ENCODE measurements at regions of chr22 and their contacts with region 1.

Region 1: GRCh38 chr22:20507253-20508066 is at the start of gene MED15:
- DNase-seq: peak; percentile 69 to 87 (median 83)
- ATAC-seq: peak; percentile 92
- H3K4me3 ChIP-seq: peak within 1 kb of the TSS; percentile 92
- H3K4me3 Mint-ChIP-seq: peak within 1 kb of the TSS; percentile 96 to 100 (median 98)
- H3K27ac ChIP-seq: peak within 1 kb of the TSS; percentile 95
- H3K27ac Mint-ChIP-seq: peak within 1 kb of the TSS; percentile 90 to 99 (median 96)
- H3K4me1 ChIP-seq: peaks cover 32 to 37% of the 10 kb centered on the region in 2 donors
- H3K4me1 Mint-ChIP-seq: peaks cover 44 to 58% (median 55%) of the 10 kb centered on the region in 7 donors
- H3K27me3 ChIP-seq: no peaks in the 10 kb centered on the region
- H3K27me3 Mint-ChIP-seq: no peaks in the 10 kb centered on the region
- total RNA-seq, gene MED15: 169 to 235 (median 201) TPM

Region 2: DNA sequence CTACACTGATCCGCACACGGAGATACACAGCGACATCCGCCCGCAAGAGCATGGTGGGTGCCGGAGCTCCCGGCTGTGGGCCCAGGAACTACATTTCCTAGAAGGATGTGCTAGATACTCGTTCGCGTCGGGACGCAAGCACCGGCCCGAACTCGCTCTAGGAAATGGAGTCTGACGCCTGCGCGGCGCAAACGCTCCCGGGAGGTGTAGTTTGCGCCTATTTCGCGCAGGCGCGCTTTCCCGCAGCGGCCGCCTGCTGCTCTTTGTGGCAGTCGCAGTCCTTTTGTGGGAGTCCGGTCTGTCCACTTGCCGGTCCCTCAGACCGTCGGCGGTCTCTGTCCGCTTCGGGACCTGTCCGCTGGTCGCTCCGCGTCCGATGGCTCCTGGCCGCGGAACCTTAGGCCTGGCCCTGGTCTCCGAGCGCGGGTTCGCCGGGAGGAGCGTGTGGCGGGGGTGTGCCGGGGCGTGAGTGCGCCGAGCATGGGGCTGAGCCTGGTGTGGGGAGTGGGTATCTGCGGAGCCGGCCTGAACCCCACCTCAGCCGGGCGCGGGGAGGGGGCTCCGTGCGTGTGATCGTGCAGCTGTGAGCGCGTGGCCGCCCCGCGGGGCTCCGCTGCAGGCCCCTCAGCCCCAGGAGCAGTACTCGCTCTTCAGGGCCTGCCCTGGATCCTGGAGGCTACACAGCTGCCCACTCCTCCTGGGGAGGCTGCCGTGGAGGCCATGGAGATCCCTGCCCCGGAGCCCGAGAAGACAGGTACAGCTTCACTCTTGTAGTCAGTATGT is 113.4 kb before region 1 on chr22 and contains the start of gene ZNF74:
- CTCF ChIA-PET with region 1: no interaction called
- POLR2A ChIA-PET with region 1: interaction called, 3 read pairs
- intact Hi-C with region 1: loop called in 1 of 2 experiments (anchors 1 kb)
- DNase-seq: peak; percentile 69 to 90 (median 86)
- ATAC-seq: peak; percentile 98
- H3K4me3 ChIP-seq: peak within 1 kb of the TSS; percentile 71
- H3K4me3 Mint-ChIP-seq: peak within 1 kb of the TSS; percentile 83 to 93 (median 91)
- H3K27ac ChIP-seq: peak within 1 kb of the TSS; percentile 73
- H3K27ac Mint-ChIP-seq: peak within 1 kb of the TSS; percentile 86 to 98 (median 92)
- H3K4me1 ChIP-seq: peaks cover 14 to 17% of the 10 kb centered on the region in 2 donors
- H3K4me1 Mint-ChIP-seq: peaks cover 23 to 52% (median 45%) of the 10 kb centered on the region in 7 donors
- H3K27me3 ChIP-seq: no peaks in the 10 kb centered on the region
- H3K27me3 Mint-ChIP-seq: no peaks in the 10 kb centered on the region
- total RNA-seq, gene ZNF74: 6.1 to 18.2 (median 12.9) TPM

Region 3: GRCh38 chr22:20495861-20496681 is 11.4 kb before region 1 on chr22:
- CTCF ChIA-PET with region 1: interaction called, 3 read pairs
- POLR2A ChIA-PET with region 1: interaction called, 4 read pairs
- intact Hi-C with region 1: loop called (anchors 1 kb)
- DNase-seq: peak; percentile 82 to 97 (median 87)
- ATAC-seq: peak; percentile 98
- H3K4me3 ChIP-seq: peak overlapping the region; percentile 100
- H3K4me3 Mint-ChIP-seq: peak overlapping the region; percentile 88 to 98 (median 94)
- H3K27ac ChIP-seq: peak overlapping the region; percentile 85
- H3K27ac Mint-ChIP-seq: peak overlapping the region; percentile 89 to 95 (median 93)
- H3K4me1 ChIP-seq: peaks cover 7 to 41% of the 10 kb centered on the region in 2 donors
- H3K4me1 Mint-ChIP-seq: peaks cover 28 to 55% (median 49%) of the 10 kb centered on the region in 7 donors
- H3K27me3 ChIP-seq: no peaks in the 10 kb centered on the region
- H3K27me3 Mint-ChIP-seq: no peaks in the 10 kb centered on the region

Region 4: GRCh38 chr22:20550821-20551744 is 43.6 kb after region 1 on chr22:
- CTCF ChIA-PET with region 1: interaction called, 4 read pairs
- POLR2A ChIA-PET with region 1: interaction called, 65 read pairs
- intact Hi-C with region 1: loop called (anchors 2 kb)
- DNase-seq: peak in 8 of 9 donors; percentile 39 to 57 (median 52)
- ATAC-seq: peak; percentile 46
- H3K4me3 ChIP-seq: peak overlapping the region; percentile 61
- H3K4me3 Mint-ChIP-seq: peak overlapping the region; percentile 67 to 91 (median 86)
- H3K27ac ChIP-seq: peak overlapping the region; percentile 69
- H3K27ac Mint-ChIP-seq: peak overlapping the region; percentile 93 to 100 (median 98)
- H3K4me1 ChIP-seq: peaks cover 83 to 93% of the 10 kb centered on the region in 2 donors
- H3K4me1 Mint-ChIP-seq: peaks cover 50 to 93% (median 88%) of the 10 kb centered on the region in 7 donors
- H3K27me3 ChIP-seq: no peaks in the 10 kb centered on the region
- H3K27me3 Mint-ChIP-seq: no peaks in the 10 kb centered on the region

Region 5: GRCh38 chr22:20568989-20569769 is 61.7 kb after region 1 on chr22:
- CTCF ChIA-PET with region 1: interaction called, 10 read pairs
- POLR2A ChIA-PET with region 1: interaction called, 32 read pairs
- intact Hi-C with region 1: loop called in 1 of 2 experiments (anchors 1 kb)
- DNase-seq: peak; percentile 56 to 91 (median 88)
- ATAC-seq: peak; percentile 82
- H3K4me3 ChIP-seq: peak overlapping the region; percentile 39
- H3K4me3 Mint-ChIP-seq: peak overlapping the region; percentile 79 to 88 (median 84)
- H3K27ac ChIP-seq: peak overlapping the region; percentile 46
- H3K27ac Mint-ChIP-seq: peak overlapping the region; percentile 92 to 99 (median 93)
- H3K4me1 ChIP-seq: peaks cover 76 to 81% of the 10 kb centered on the region in 2 donors
- H3K4me1 Mint-ChIP-seq: peaks cover 59 to 96% (median 80%) of the 10 kb centered on the region in 7 donors
- H3K27me3 ChIP-seq: no peaks in the 10 kb centered on the region
- H3K27me3 Mint-ChIP-seq: no peaks in the 10 kb centered on the region

Region 6: DNA sequence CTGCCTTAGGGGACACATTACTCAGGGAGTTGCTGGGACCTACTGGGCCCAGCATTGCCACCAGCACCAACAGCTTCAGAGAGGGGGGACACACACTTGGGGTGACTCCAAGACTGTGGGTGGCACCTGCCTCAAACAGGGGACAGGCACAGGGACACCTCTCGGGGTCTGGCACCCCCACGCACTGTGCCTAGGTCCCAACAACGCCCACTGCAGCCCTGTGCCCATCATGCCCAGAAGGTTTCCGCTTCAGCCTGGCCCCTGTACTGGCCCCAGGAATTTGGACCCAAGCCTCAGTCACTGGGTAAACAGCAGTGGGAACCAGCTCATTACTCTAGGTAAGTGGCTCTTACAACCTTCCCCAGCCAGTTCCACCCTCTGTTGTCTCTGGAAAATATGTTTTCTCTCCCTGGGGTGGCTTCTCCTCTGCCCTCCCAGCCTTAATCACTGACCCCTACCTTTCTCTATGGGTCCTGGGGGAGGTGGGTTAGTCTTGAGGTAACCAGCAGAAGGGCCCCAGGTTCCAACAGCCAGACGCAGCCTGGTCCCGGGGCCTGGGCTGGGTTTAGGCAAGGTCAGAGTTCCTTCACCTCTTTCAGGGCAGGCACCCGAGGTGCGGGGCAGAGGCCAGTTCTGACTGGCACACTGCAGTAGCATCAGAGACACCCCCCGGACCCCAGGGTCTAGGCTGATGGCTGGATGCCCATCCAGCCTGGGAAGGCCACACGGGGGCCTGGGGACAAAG is 123.6 kb after region 1 on chr22:
- CTCF ChIA-PET with region 1: no interaction called
- POLR2A ChIA-PET with region 1: no interaction called
- intact Hi-C with region 1: no loop called
- DNase-seq: no peak
- ATAC-seq: no peak
- H3K4me3 ChIP-seq: no peak overlapping the region
- H3K4me3 Mint-ChIP-seq: no peak overlapping the region
- H3K27ac ChIP-seq: no peak overlapping the region
- H3K27ac Mint-ChIP-seq: no peak overlapping the region
- H3K4me1 ChIP-seq: no peaks in the 10 kb centered on the region
- H3K4me1 Mint-ChIP-seq: peaks cover 0 to 5% (median 0%) of the 10 kb centered on the region in 7 donors
- H3K27me3 ChIP-seq: no peaks in the 10 kb centered on the region
- H3K27me3 Mint-ChIP-seq: peaks cover 0 to 19% (median 0%) of the 10 kb centered on the region in 5 donors

Region 7: DNA sequence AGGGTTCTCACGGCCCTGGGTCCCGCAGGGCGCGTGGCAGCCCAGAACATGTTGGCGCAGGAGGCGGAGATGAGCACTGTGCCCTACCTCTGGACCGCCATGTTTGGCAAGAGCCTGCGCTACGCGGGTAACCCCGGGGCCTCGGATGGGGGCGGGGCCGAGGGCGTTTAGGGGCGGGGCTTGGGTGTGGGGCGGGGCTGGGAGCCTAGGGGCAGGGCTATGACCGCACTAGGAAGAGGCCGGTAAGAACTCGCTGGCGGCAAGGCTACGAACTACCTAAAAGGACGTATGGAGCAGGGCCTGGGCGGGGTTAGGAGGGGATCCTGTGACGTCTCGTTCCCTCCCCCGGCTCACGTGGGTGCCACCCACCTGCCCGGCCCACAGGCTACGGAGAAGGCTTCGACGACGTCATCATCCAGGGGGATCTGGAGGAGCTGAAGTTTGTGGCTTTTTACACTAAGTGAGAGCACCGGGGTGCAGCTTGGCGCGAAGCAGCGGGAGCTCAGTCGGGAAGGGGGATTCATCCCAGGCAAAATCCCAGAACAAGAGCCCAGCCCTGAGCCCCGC is 471.9 kb after region 1 on chr22:
- CTCF ChIA-PET with region 1: no interaction called
- POLR2A ChIA-PET with region 1: no interaction called
- intact Hi-C with region 1: no loop called
- DNase-seq: peak in 8 of 9 donors; percentile 44 to 86 (median 66)
- ATAC-seq: peak; percentile 84
- H3K4me3 ChIP-seq: no peak overlapping the region
- H3K4me3 Mint-ChIP-seq: peak overlapping the region; percentile 69 to 97 (median 80)
- H3K27ac ChIP-seq: peak overlapping the region; percentile 3
- H3K27ac Mint-ChIP-seq: peak overlapping the region; percentile 61 to 94 (median 89)
- H3K4me1 ChIP-seq: peaks cover 15 to 32% of the 10 kb centered on the region in 2 donors
- H3K4me1 Mint-ChIP-seq: peaks cover 29 to 47% (median 38%) of the 10 kb centered on the region in 7 donors
- H3K27me3 ChIP-seq: no peaks in the 10 kb centered on the region
- H3K27me3 Mint-ChIP-seq: no peaks in the 10 kb centered on the region